Left ventricle myocardium superior (tissue), 1 donor: ENCODE measurements at regions of chr16 and their contacts with region 1.

Region 1: GRCh38 chr16:23182460-23183309 is at the start of gene SCNN1G:
- DNase-seq: peak; percentile 86
- ATAC-seq: peak; percentile 95
- total RNA-seq, gene SCNN1G: 0.12 TPM

Region 2: DNA sequence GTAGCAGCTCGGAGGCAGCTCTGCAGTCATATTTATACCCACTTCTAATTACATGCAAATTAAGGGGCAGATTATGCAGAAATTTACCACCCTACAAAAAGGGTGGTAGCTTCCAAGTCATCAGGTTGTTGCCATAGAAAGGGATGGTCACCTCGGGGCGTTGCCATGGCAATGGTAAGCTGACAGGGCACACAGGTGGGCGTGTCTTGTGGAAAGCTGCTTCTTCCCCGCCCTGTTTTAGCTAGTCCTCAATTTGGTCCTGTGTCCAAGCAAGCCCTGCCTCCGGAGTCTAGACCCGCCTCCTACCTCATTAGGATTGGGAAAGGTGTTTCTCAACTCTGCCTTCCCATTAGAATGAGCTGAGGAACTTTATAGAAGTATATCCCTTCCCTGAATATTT is 270.0 kb before region 1 on chr16:
- intact Hi-C with region 1: no loop called
- DNase-seq: no peak
- ATAC-seq: no peak

Region 3: DNA sequence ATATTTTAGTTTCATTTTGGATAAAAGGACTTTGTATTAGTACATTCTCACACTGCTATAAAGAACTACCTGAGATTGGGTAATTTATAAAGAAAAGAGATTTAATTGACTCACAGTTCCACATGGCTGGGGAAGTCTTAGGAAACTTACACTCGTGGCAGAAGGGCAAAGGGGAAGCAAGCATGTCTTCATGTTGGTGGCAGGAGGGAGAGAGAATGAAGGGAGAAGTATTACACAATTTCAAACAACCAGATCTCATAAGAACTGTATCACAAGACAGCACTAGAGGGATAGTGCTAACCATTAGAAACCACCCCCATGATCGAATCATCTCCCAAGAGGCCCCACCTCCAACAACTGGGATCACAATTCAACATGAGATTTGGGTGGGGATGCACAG is 176.3 kb before region 1 on chr16:
- intact Hi-C with region 1: no loop called
- DNase-seq: no peak
- ATAC-seq: no peak

Region 4: DNA sequence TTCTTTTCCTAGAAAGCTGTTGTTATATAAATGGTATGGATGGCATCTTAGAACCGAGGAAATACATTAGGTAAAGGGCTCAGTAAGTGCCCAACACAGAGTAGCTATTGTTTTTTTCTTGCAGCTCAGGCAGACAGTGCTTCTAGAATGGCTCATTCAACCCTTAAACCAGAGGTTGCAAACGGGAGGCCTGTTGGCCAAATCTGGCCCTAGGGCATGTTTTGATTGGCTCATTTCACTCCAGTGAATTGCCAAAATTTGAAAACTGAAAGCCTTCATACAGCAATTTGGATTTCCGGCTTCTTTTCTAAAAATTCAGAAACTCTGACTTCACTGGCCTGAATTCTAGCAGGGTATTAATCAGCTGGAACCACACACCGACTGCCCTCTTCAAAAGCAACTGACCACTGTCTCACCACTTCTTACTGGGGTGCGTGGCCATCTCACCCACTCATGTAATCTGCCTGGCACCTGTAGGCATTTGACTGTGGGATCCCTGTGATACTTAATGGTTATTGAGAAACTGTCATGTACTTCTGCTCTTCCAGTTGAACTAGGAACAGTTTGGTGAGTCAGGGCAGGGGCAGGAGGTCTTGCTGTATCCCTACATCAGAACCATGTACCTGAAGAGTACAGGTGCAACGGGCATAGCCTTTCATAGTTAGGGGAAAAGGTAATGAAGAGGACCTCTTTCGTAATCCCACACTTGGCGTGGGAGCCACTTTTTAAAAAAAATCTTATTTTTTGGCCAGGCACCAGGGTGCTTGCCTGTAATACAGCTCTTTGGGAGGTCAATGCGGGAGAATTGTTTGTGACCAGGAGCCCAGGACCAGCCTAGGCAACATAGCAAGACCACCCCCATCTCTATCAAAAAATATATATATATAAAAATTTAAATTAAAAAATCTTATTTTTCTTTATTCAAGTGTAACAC is 65.8 kb after region 1 on chr16:
- intact Hi-C with region 1: loop called (anchors 10 kb)
- DNase-seq: no peak
- ATAC-seq: peak; percentile 31

Region 5: DNA sequence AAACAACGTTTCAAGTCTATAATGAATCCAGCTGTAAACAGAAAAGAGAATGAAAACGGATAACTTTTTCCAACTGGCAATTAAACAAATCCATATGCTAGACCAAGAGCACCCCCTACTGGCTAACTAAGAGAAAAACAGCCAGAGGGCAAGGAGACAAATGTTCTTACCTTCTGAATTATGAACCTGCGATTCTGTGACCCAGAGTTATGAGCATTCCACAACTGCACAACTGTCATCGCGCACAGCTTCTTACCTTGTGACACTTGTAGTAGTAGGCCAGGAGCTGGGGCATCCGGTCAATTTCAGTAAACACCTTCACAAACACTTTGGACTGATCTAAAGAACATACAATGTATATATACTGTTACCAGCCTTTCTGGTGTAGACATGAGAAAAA is 251.7 kb after region 1 on chr16:
- intact Hi-C with region 1: loop called (anchors 5 kb)
- DNase-seq: no peak
- ATAC-seq: peak; percentile 57